ENCODE measurements at regions of chr13 and their contacts with region 1.

Region 1: DNA sequence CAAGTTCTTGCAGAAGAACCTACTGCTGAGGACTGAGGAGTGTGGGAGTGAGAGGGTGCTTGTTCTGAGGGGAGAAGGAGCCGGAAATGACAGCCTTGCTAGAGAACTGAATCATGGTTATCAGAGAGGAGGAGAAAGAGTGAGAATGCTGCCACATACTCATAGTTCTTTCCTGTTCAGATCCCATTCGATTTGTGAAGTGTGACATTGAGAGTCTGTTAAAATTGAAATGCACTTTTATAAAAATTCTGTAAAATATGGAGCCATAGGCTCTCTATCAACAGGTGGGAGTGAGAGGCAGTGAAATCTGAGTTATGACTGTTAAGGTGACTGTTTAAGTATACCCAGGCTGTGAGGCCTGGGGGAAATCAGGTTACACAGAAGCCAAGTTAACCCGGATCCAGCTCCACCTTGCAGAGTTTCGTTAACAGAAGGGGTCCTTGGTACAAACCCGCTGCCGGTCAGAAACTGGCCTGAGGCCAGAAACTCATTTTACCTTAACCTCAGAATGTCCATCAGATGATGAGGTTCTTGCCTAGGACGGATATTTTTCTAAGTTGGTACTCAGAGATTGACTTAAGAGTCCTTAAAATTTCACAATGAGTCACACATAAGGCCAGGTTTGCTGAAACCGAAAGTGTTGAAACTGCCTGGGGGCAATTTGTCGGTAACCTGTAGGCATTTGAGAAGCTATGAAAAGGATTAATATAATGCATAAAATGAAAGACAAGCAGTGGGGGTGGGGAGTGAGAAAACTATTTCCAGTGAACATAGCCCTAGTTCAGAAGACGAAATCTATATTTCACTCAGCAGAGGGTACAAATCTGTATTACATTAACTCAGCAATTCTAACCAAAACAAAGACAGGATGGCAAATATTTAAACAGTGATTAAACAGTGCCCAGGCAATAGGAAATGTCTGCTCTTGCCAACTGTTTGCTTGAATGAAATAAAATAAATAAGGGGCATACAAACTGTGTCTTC is 350.5 kb downstream of the KCNRG start:
- DNase-seq: no peak
- ATAC-seq: peak; percentile 28
- H3K4me3 Mint-ChIP-seq: peak overlapping the region; percentile 63
- H3K27ac Mint-ChIP-seq: peak overlapping the region; percentile 86
- H3K4me1 Mint-ChIP-seq: peaks cover 57% of the 10 kb centered on the region
- H3K27me3 Mint-ChIP-seq: no peaks in the 10 kb centered on the region
- CTCF ChIP-seq: no peak

Region 2: GRCh38 chr13:50130123-50130946 is 235.4 kb before region 1 on chr13:
- CTCF ChIA-PET with region 1: interaction called, 3 read pairs
- POLR2A ChIA-PET with region 1: interaction called, 92 read pairs
- intact Hi-C with region 1: loop called (anchors 1 kb)
- DNase-seq: peak; percentile 54
- ATAC-seq: peak; percentile 36
- H3K4me3 Mint-ChIP-seq: peak overlapping the region; percentile 89
- H3K27ac Mint-ChIP-seq: peak overlapping the region; percentile 95
- H3K4me1 Mint-ChIP-seq: peaks cover 60% of the 10 kb centered on the region
- H3K27me3 Mint-ChIP-seq: peaks cover 16% of the 10 kb centered on the region
- CTCF ChIP-seq: no peak

Region 3: GRCh38 chr13:50236898-50237318 is 128.8 kb before region 1 on chr13:
- CTCF ChIA-PET with region 1: no interaction called
- POLR2A ChIA-PET with region 1: interaction called, 27 read pairs
- intact Hi-C with region 1: loop called (anchors 1 kb)
- DNase-seq: no peak
- ATAC-seq: peak; percentile 90
- H3K4me3 Mint-ChIP-seq: peak overlapping the region; percentile 55
- H3K27ac Mint-ChIP-seq: peak overlapping the region; percentile 92
- H3K4me1 Mint-ChIP-seq: peaks cover 53% of the 10 kb centered on the region
- H3K27me3 Mint-ChIP-seq: no peaks in the 10 kb centered on the region
- CTCF ChIP-seq: no peak

Region 4: DNA sequence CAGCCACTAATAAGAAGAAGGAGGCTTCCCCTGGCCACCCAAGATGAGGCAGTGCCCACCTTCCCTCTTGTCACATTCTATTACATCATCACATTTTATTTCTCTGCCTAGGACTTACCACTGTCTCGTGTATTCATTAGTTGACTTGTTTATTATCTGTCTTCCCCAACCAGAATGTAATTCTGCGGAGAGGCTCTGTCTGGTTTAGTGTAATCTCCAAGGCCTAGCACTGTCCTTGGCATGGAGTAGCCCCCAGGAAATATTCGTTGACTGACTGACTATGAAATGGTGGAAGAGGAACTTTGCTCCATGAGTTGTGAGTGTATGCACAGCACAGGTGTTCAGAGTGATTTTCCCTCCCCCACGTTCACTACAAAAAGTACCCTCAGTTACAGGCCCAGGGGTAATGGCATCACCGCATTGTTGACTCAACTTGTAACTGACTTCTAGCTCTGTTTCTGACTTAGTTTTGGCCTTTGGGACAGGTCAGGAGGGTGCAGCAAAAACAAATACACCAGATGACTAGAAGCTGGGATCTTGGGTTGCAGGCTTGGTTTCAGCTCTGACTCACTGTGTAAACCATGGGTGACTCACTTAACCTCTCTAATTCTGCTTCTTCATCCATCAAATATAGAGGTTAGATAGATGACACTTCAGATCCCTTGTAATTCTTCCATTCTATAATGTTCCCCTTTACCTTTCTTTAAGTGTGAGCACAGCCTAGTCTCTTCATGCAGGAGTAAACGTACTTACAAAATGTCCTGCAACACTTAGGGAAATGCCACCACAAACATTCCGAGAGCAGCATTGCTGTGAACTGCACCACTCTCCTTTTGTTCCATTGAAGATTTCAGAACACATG is 120.8 kb before region 1 on chr13:
- CTCF ChIA-PET with region 1: no interaction called
- POLR2A ChIA-PET with region 1: interaction called, 14 read pairs
- intact Hi-C with region 1: loop called (anchors 1 kb)
- DNase-seq: no peak
- ATAC-seq: peak; percentile 92
- H3K4me3 Mint-ChIP-seq: peak overlapping the region; percentile 2
- H3K27ac Mint-ChIP-seq: peak overlapping the region; percentile 91
- H3K4me1 Mint-ChIP-seq: peaks cover 40% of the 10 kb centered on the region
- H3K27me3 Mint-ChIP-seq: no peaks in the 10 kb centered on the region
- CTCF ChIP-seq: no peak

Region 5: DNA sequence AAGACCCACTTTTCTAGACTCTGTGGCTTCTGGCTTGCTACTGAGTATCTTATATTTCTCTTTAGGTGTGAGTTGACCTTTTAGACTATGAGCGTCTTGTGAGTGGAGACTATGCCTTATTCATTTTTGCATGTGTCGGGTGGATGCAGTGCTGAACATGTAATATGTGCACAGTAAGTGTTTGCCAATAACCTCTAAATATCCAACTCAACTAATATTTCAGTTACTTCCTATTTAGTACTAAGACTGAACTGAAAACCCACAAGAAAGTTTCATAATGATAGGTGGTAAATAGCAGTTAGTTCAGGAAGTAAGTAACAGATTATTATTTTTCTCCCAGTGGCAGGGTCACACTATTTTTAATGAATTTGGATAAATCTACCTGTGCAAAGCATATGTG is 81.2 kb before region 1 on chr13:
- CTCF ChIA-PET with region 1: no interaction called
- POLR2A ChIA-PET with region 1: interaction called, 10 read pairs
- intact Hi-C with region 1: no loop called
- DNase-seq: no peak
- ATAC-seq: peak; percentile 52
- H3K4me3 Mint-ChIP-seq: no peak overlapping the region
- H3K27ac Mint-ChIP-seq: no peak overlapping the region
- H3K4me1 Mint-ChIP-seq: peaks cover 14% of the 10 kb centered on the region
- H3K27me3 Mint-ChIP-seq: no peaks in the 10 kb centered on the region
- CTCF ChIP-seq: no peak

Region 6: GRCh38 chr13:50387051-50387581 is 21.4 kb after region 1 on chr13:
- CTCF ChIA-PET with region 1: interaction called, 8 read pairs
- POLR2A ChIA-PET with region 1: interaction called, 10 read pairs
- intact Hi-C with region 1: no loop called
- DNase-seq: peak; percentile 28
- ATAC-seq: peak; percentile 81
- H3K4me3 Mint-ChIP-seq: no peak overlapping the region
- H3K27ac Mint-ChIP-seq: no peak overlapping the region
- H3K4me1 Mint-ChIP-seq: peaks cover 4% of the 10 kb centered on the region
- H3K27me3 Mint-ChIP-seq: no peaks in the 10 kb centered on the region
- CTCF ChIP-seq: no peak

Region 7: GRCh38 chr13:50512474-50513299 is 147.0 kb after region 1 on chr13:
- CTCF ChIA-PET with region 1: no interaction called
- POLR2A ChIA-PET with region 1: interaction called, 12 read pairs
- intact Hi-C with region 1: no loop called
- DNase-seq: peak; percentile 40
- ATAC-seq: peak; percentile 81
- H3K4me3 Mint-ChIP-seq: no peak overlapping the region
- H3K27ac Mint-ChIP-seq: no peak overlapping the region
- H3K4me1 Mint-ChIP-seq: peaks cover 3% of the 10 kb centered on the region
- H3K27me3 Mint-ChIP-seq: no peaks in the 10 kb centered on the region
- CTCF ChIP-seq: no peak